Naive thymus-derived CD4-positive, alpha-beta T cell (primary cell): ENCODE measurements at regions of chr17 and their contacts with region 1.

Region 1: GRCh38 chr17:46940621-46941404 is 17.9 kb downstream of the GOSR2 start:
- DNase-seq: peak; percentile 31 to 69 (median 62)
- ATAC-seq: peak; percentile 89
- H3K4me3 ChIP-seq: no peak overlapping the region
- H3K4me3 Mint-ChIP-seq: no peak overlapping the region
- H3K27ac ChIP-seq: no peak overlapping the region
- H3K27ac Mint-ChIP-seq: peak overlapping the region in 6 of 9 donors; percentile 13 to 70 (median 46)
- H3K4me1 ChIP-seq: peaks cover 0 to 10% of the 10 kb centered on the region in 2 donors
- H3K4me1 Mint-ChIP-seq: peaks cover 15 to 34% (median 23%) of the 10 kb centered on the region in 7 donors
- H3K27me3 ChIP-seq: no peaks in the 10 kb centered on the region
- H3K27me3 Mint-ChIP-seq: no peaks in the 10 kb centered on the region

Region 2: GRCh38 chr17:46811978-46812583 is 128.7 kb before region 1 on chr17:
- CTCF ChIA-PET with region 1: no interaction called
- POLR2A ChIA-PET with region 1: no interaction called
- intact Hi-C with region 1: no loop called
- DNase-seq: no peak
- ATAC-seq: no peak
- H3K4me3 ChIP-seq: no peak overlapping the region
- H3K4me3 Mint-ChIP-seq: no peak overlapping the region
- H3K27ac ChIP-seq: no peak overlapping the region
- H3K27ac Mint-ChIP-seq: no peak overlapping the region
- H3K4me1 ChIP-seq: no peaks in the 10 kb centered on the region
- H3K4me1 Mint-ChIP-seq: peaks cover 0 to 8% (median 0%) of the 10 kb centered on the region in 7 donors
- H3K27me3 ChIP-seq: peaks cover 10 to 27% of the 10 kb centered on the region in 2 donors
- H3K27me3 Mint-ChIP-seq: peaks cover 46 to 57% (median 52%) of the 10 kb centered on the region in 5 donors

Region 3: DNA sequence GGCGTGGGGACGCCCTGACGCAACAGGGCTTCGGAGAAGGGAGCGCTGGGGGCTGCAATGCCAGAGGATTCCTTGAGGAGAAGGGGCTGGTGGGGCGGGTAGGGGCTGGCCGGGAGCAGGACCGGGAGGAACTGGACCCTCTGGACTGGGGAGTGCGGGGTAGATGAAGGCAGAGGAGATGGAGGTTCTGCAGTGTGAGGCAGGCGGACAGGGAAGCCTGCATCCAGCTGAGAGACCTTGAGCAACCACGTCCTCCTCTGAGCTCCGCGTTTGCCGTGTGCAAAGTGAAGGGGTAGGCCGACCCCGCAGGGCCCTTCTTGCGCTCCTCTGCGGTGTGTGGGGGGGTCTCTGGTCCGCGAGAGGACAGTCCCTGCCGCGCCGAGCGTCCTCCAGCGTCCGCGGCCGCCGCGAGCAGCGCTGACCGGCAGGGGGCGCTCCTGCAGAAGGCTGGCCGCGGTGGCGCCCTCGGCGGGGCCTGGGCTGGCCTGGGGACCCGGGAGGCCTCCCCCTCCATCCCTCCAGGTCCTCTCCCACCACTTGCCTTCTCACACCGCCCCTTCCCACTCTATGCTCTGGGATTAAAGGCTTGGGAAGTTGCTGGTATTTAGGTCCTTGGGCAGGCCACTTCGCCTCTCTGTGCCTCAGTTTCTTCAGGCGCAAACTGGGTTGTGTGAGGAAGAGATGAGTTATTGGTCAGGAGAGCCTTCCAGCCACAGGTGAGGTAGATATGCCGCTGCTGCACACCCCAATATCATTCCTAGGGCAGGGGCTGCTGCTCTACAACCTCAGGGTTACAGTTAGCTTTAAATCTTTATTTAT is 99.0 kb before region 1 on chr17:
- CTCF ChIA-PET with region 1: interaction called, 4 read pairs
- POLR2A ChIA-PET with region 1: no interaction called
- intact Hi-C with region 1: loop called (anchors 1 to 2 kb)
- DNase-seq: peak in 2 of 9 donors; percentile 26 to 45
- ATAC-seq: peak; percentile 55
- H3K4me3 ChIP-seq: no peak overlapping the region
- H3K4me3 Mint-ChIP-seq: no peak overlapping the region
- H3K27ac ChIP-seq: no peak overlapping the region
- H3K27ac Mint-ChIP-seq: no peak overlapping the region
- H3K4me1 ChIP-seq: no peaks in the 10 kb centered on the region
- H3K4me1 Mint-ChIP-seq: peaks cover 0 to 8% (median 4%) of the 10 kb centered on the region in 7 donors
- H3K27me3 ChIP-seq: peaks cover 0 to 14% of the 10 kb centered on the region in 2 donors
- H3K27me3 Mint-ChIP-seq: peaks cover 37 to 66% (median 45%) of the 10 kb centered on the region in 5 donors

Region 4: GRCh38 chr17:46894476-46895151 is 46.2 kb before region 1 on chr17:
- CTCF ChIA-PET with region 1: no interaction called
- POLR2A ChIA-PET with region 1: no interaction called
- intact Hi-C with region 1: no loop called
- DNase-seq: no peak
- ATAC-seq: no peak
- H3K4me3 ChIP-seq: no peak overlapping the region
- H3K4me3 Mint-ChIP-seq: no peak overlapping the region
- H3K27ac ChIP-seq: no peak overlapping the region
- H3K27ac Mint-ChIP-seq: no peak overlapping the region
- H3K4me1 ChIP-seq: no peaks in the 10 kb centered on the region
- H3K4me1 Mint-ChIP-seq: no peaks in the 10 kb centered on the region
- H3K27me3 ChIP-seq: no peaks in the 10 kb centered on the region
- H3K27me3 Mint-ChIP-seq: peaks cover 5 to 34% (median 17%) of the 10 kb centered on the region in 5 donors

Region 5: GRCh38 chr17:46922804-46923635 is 17.8 kb before region 1 on chr17 and contains the start of gene GOSR2:
- CTCF ChIA-PET with region 1: interaction called, 3 read pairs
- POLR2A ChIA-PET with region 1: no interaction called
- intact Hi-C with region 1: loop called in 1 of 2 experiments (anchors 2 kb)
- DNase-seq: peak; percentile 75 to 91 (median 87)
- ATAC-seq: peak; percentile 98
- H3K4me3 ChIP-seq: peak within 1 kb of the TSS; percentile 84
- H3K4me3 Mint-ChIP-seq: peak within 1 kb of the TSS; percentile 86 to 97 (median 92)
- H3K27ac ChIP-seq: peak within 1 kb of the TSS; percentile 78
- H3K27ac Mint-ChIP-seq: peak within 1 kb of the TSS; percentile 97 to 100 (median 100)
- H3K4me1 ChIP-seq: peaks cover 16 to 32% of the 10 kb centered on the region in 2 donors
- H3K4me1 Mint-ChIP-seq: peaks cover 35 to 59% (median 52%) of the 10 kb centered on the region in 7 donors
- H3K27me3 ChIP-seq: no peaks in the 10 kb centered on the region
- H3K27me3 Mint-ChIP-seq: peaks cover 0 to 4% (median 0%) of the 10 kb centered on the region in 5 donors
- total RNA-seq, gene GOSR2: 62.1 to 95.5 (median 71.0) TPM

Region 6: DNA sequence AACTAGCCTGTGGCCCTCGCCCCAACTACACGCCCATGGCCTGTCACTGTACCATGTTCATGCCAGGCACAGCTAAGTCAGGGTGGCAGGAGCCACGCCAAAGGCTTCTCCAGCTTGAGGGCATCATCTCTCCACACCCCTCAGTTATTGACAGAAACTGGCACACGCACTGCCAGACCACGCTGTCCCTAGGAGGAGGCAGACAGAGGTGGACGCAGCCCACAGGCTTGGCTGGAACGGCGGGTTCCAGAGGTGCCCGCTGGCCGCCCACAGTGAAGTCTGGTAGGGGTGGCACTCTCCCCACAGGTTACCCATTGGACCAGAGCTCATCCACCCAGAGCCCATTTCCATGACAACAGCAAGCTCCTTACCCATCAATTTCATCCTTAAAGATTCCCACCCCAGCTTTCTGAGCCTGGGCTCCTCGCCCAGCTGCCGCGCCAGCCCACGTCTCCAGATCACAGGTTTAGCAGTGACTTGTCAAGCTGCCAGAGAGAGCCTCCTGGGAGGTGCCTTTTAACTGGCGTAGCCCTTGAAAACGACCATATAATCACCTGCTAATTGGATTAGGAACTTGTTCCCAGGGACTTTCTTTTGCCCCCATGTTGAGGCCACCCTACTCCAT is 10.3 kb after region 1 on chr17:
- CTCF ChIA-PET with region 1: interaction called, 14 read pairs
- POLR2A ChIA-PET with region 1: no interaction called
- intact Hi-C with region 1: no loop called
- DNase-seq: no peak
- ATAC-seq: no peak
- H3K4me3 ChIP-seq: no peak overlapping the region
- H3K4me3 Mint-ChIP-seq: no peak overlapping the region
- H3K27ac ChIP-seq: no peak overlapping the region
- H3K27ac Mint-ChIP-seq: no peak overlapping the region
- H3K4me1 ChIP-seq: no peaks in the 10 kb centered on the region
- H3K4me1 Mint-ChIP-seq: peaks cover 0 to 4% (median 0%) of the 10 kb centered on the region in 7 donors
- H3K27me3 ChIP-seq: no peaks in the 10 kb centered on the region
- H3K27me3 Mint-ChIP-seq: no peaks in the 10 kb centered on the region

Region 7: DNA sequence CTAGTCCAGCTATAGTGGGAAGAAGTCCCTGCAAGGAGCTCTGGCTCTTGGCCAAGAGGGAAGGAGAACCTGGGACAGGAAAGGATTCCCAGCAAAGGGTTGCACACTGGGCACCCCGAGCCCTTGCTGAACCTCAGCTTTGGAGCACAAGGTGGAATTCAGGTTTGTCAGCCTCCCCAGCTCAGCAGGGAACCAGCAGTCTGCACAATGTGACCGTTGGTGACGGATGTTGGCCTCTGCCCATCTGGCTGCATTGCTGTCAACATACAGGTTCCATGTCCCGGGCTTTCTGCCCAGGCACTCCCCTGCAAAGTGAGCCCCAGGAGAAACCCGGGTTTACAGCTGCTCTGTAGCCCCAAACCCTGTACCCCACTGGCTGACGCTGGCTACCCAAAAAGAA is 31.5 kb after region 1 on chr17:
- CTCF ChIA-PET with region 1: no interaction called
- POLR2A ChIA-PET with region 1: no interaction called
- intact Hi-C with region 1: no loop called
- DNase-seq: no peak
- ATAC-seq: no peak
- H3K4me3 ChIP-seq: no peak overlapping the region
- H3K4me3 Mint-ChIP-seq: no peak overlapping the region
- H3K27ac ChIP-seq: no peak overlapping the region
- H3K27ac Mint-ChIP-seq: no peak overlapping the region
- H3K4me1 ChIP-seq: no peaks in the 10 kb centered on the region
- H3K4me1 Mint-ChIP-seq: no peaks in the 10 kb centered on the region
- H3K27me3 ChIP-seq: peaks cover 0 to 2% of the 10 kb centered on the region in 2 donors
- H3K27me3 Mint-ChIP-seq: peaks cover 14 to 21% (median 16%) of the 10 kb centered on the region in 5 donors

Region 8: DNA sequence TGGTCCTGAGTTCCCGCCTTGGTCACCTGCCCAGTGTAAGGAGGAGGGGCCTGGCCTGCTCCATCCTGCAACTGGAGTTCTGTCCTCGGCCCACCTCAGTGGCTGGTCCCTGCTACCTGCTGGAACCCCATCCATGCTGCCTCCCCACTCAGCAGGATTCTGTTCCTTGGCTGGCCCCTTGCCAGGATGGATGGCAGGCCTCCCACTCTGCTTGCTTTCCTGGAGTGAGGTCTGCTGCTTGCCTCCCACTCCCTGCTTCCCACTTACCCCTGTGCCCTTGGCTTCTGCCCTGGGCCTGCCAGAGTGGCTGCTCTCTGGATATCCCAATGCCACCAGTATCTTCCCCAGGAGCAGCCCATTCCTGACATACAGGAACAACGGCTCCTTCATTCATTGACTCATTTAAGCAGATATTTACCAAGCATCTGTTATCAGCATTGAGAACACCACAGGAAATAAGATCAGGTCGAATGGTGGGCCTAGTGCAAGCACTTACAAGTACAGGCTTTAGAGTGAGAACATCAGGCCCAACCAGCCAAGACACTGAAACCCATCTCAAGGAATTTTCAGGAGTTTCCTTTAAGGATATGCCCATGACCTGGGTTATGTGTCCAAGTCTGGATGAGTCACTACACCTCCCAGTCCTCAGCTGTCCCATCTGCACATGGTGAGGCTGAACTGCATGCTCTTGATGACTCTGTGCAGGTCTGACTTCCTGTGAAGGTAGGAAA is 55.2 kb after region 1 on chr17:
- CTCF ChIA-PET with region 1: interaction called, 6 read pairs
- POLR2A ChIA-PET with region 1: no interaction called
- intact Hi-C with region 1: loop called (anchors 1 to 2 kb)
- DNase-seq: no peak
- ATAC-seq: no peak
- H3K4me3 ChIP-seq: no peak overlapping the region
- H3K4me3 Mint-ChIP-seq: no peak overlapping the region
- H3K27ac ChIP-seq: no peak overlapping the region
- H3K27ac Mint-ChIP-seq: no peak overlapping the region
- H3K4me1 ChIP-seq: no peaks in the 10 kb centered on the region
- H3K4me1 Mint-ChIP-seq: peaks cover 0 to 1% (median 0%) of the 10 kb centered on the region in 7 donors
- H3K27me3 ChIP-seq: no peaks in the 10 kb centered on the region
- H3K27me3 Mint-ChIP-seq: no peaks in the 10 kb centered on the region

Region 9: GRCh38 chr17:47066841-47067682 is 126.2 kb after region 1 on chr17:
- CTCF ChIA-PET with region 1: no interaction called
- POLR2A ChIA-PET with region 1: no interaction called
- intact Hi-C with region 1: no loop called
- DNase-seq: peak; percentile 42 to 87 (median 83)
- ATAC-seq: peak; percentile 100
- H3K4me3 ChIP-seq: peak overlapping the region; percentile 95
- H3K4me3 Mint-ChIP-seq: peak overlapping the region; percentile 81 to 97 (median 95)
- H3K27ac ChIP-seq: peak overlapping the region; percentile 89
- H3K27ac Mint-ChIP-seq: peak overlapping the region; percentile 70 to 97 (median 95)
- H3K4me1 ChIP-seq: peaks cover 0 to 10% of the 10 kb centered on the region in 2 donors
- H3K4me1 Mint-ChIP-seq: peaks cover 17 to 48% (median 39%) of the 10 kb centered on the region in 7 donors
- H3K27me3 ChIP-seq: no peaks in the 10 kb centered on the region
- H3K27me3 Mint-ChIP-seq: no peaks in the 10 kb centered on the region

Region 10: DNA sequence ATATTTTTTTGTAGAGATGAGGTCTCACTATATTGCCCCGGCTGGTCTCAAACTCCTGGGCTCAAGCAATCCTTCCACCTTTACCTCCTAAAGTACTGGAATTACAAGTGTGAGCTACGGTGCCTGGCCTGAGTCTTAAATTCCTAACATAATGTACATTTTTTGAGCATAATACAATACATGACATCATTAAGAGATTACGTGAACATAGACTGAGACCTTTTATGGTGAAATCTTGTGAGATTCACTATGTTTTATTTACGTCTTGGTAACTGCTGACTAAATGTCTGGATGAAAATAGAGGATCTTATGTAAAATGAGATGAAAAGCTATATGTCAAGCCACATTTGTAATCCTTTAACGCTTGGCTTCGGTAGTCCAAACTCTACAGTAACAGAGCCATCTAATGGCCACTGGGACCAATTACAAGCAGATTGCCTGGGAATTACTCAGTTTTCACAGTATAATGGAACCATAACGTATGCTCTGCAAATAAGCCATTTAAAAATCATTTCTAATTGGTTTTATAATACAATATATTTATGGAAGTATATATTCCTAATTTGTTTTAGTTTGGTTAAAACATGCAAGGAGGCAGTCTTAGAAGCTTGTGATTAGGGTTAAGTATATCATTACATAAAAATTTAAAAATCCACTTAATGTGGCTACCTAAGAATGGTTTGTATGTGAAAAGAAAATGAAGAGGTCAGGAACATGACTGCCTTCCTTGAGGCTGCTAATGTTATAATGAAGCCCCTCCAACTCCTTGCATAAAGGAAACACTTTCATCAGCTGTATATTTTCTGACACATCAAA is 374.8 kb after region 1 on chr17:
- CTCF ChIA-PET with region 1: interaction called, 3 read pairs
- POLR2A ChIA-PET with region 1: no interaction called
- intact Hi-C with region 1: loop called in 1 of 2 experiments (anchors 5 kb)
- DNase-seq: peak in 7 of 9 donors; percentile 30 to 56 (median 48)
- ATAC-seq: peak; percentile 90
- H3K4me3 ChIP-seq: no peak overlapping the region
- H3K4me3 Mint-ChIP-seq: no peak overlapping the region
- H3K27ac ChIP-seq: no peak overlapping the region
- H3K27ac Mint-ChIP-seq: no peak overlapping the region
- H3K4me1 ChIP-seq: no peaks in the 10 kb centered on the region
- H3K4me1 Mint-ChIP-seq: peaks cover 0 to 3% (median 0%) of the 10 kb centered on the region in 7 donors
- H3K27me3 ChIP-seq: no peaks in the 10 kb centered on the region
- H3K27me3 Mint-ChIP-seq: peaks cover 0 to 14% (median 0%) of the 10 kb centered on the region in 5 donors

Region 11: GRCh38 chr17:47615766-47616424 is 675.1 kb after region 1 on chr17:
- CTCF ChIA-PET with region 1: interaction called, 4 read pairs
- POLR2A ChIA-PET with region 1: no interaction called
- intact Hi-C with region 1: loop called in 1 of 2 experiments (anchors 5 kb)
- DNase-seq: peak in 7 of 9 donors; percentile 17 to 59 (median 44)
- ATAC-seq: peak; percentile 51
- H3K4me3 ChIP-seq: no peak overlapping the region
- H3K4me3 Mint-ChIP-seq: no peak overlapping the region
- H3K27ac ChIP-seq: no peak overlapping the region
- H3K27ac Mint-ChIP-seq: peak overlapping the region in 6 of 9 donors; percentile 19 to 81 (median 52)
- H3K4me1 ChIP-seq: no peaks in the 10 kb centered on the region
- H3K4me1 Mint-ChIP-seq: peaks cover 0 to 14% (median 5%) of the 10 kb centered on the region in 7 donors
- H3K27me3 ChIP-seq: no peaks in the 10 kb centered on the region
- H3K27me3 Mint-ChIP-seq: no peaks in the 10 kb centered on the region